ENCODE measurements at regions of chr15 and their contacts with region 1.

Region 1: GRCh38 chr15:27965546-27965945 is 133.6 kb downstream of the OCA2 start:
- DNase-seq: no peak
- H3K4me3 ChIP-seq: no peak overlapping the region
- H3K27ac ChIP-seq: no peak overlapping the region
- H3K27me3 ChIP-seq: no peaks in the 10 kb centered on the region
- CTCF ChIP-seq: no peak

Region 2: GRCh38 chr15:27934782-27935181 is 30.8 kb before region 1 on chr15:
- intact Hi-C with region 1: loop called in 1 of 2 experiments (anchors 2 kb)
- DNase-seq: no peak
- H3K4me3 ChIP-seq: no peak overlapping the region
- H3K27ac ChIP-seq: no peak overlapping the region
- H3K27me3 ChIP-seq: peaks cover 0 to 8% (median 0%) of the 10 kb centered on the region in 45 donors
- CTCF ChIP-seq: no peak